ENCODE measurements at regions of chr1 and their contacts with region 1.

Region 1: GRCh38 chr1:8727809-8728213 is 89.6 kb downstream of the RERE start:
- H3K4me3 ChIP-seq: no peak overlapping the region
- H3K27ac ChIP-seq: no peak overlapping the region
- H3K4me1 ChIP-seq: peaks cover 7% of the 10 kb centered on the region
- CTCF ChIP-seq: no peak

Region 2: GRCh38 chr1:8560611-8561544 is 166.9 kb before region 1 on chr1:
- CTCF ChIA-PET with region 1: interaction called, 49 read pairs
- POLR2A ChIA-PET with region 1: no interaction called
- H3K4me3 ChIP-seq: no peak overlapping the region
- H3K27ac ChIP-seq: no peak overlapping the region
- H3K4me1 ChIP-seq: no peaks in the 10 kb centered on the region
- CTCF ChIP-seq: peak; percentile 56; the same call in 1 of the 2 replicates

Region 3: DNA sequence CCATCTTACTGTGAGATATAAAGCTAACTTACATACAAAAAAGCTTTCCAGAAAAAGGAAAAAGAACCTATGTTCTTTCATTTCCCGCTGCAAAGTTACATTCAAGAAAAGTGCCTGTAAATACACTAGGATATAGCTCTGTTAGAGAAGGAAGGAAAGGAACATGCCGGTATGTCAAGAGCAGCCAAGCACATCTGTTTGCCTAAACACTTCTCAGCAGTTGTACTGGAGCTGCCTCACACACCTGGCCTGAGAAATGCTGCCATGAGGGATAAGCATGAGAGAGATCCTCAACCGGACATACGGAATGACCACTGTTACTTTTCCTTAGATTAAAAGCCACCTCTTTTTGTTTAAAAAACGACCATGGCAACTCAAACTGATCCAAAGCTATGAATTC is 100.1 kb before region 1 on chr1:
- CTCF ChIA-PET with region 1: interaction called, 15 read pairs
- POLR2A ChIA-PET with region 1: no interaction called
- H3K4me3 ChIP-seq: no peak overlapping the region
- H3K27ac ChIP-seq: no peak overlapping the region
- H3K4me1 ChIP-seq: peaks cover 13% of the 10 kb centered on the region
- CTCF ChIP-seq: no peak

Region 4: GRCh38 chr1:8680664-8681650 is 46.9 kb before region 1 on chr1:
- CTCF ChIA-PET with region 1: interaction called, 13 read pairs
- POLR2A ChIA-PET with region 1: no interaction called
- H3K4me3 ChIP-seq: no peak overlapping the region
- H3K27ac ChIP-seq: no peak overlapping the region
- H3K4me1 ChIP-seq: peaks cover 41% of the 10 kb centered on the region
- CTCF ChIP-seq: no peak

Region 5: DNA sequence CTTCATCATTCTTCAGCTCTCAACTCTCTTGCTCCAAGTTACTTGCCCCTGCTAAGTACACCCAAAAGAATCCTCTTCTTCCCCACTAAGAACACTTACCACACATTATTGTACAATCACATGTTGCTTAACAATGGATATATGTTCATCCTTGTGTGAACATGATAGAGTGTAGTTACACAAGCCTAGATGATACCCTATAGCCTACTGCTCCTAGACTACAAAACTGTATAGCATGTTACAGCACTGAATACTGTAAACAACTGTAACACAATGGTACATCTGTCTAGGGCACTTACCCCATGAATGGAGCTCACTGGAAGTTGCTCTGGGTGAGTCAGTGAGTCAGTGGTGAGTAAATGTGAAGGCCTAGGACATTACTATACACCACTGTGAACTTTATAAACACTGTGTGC is 12.2 kb after region 1 on chr1:
- CTCF ChIA-PET with region 1: interaction called, 12 read pairs
- POLR2A ChIA-PET with region 1: no interaction called
- H3K4me3 ChIP-seq: no peak overlapping the region
- H3K27ac ChIP-seq: no peak overlapping the region
- H3K4me1 ChIP-seq: no peaks in the 10 kb centered on the region
- CTCF ChIP-seq: no peak

Measured in HEK293 (cell line).